ENCODE measurements at regions of chr3 and their contacts with region 1.

Region 1: DNA sequence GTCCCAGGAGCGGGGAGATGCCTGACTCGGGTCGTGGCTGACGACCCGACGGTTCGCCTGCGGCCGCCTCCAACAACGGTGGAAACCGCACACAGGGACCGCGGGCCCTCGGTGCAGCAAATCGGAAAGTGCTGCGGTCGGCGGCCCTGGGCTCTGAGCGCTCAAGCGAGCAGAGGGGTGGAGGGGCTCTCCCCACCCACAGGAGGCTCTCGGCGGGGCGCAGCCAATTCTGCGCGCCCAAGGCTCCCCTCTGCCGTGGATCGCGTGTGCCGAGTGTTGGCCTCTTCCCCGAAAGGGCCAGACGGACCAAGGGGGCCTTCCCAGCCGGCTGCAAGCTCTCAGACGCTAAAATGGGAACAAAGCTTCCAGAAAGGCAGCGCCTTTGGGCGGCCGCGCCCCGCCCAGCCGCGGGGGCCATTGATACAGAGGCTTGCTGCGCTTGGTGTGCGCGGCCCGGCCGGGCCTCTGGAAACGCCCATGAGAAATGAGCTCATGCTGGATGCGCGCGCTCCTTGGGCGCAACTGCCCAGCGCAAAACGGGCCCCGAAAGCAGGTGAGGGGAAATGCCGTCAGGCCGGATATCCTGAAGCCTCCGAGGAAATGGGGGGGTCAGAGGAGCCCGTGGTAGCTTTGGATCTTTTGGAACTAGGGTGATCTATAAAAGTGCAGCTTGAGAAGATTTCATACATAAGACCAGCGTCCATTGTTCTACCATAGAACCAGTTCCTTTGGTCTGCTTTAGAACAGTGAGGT is 1.2 kb upstream of the GSK3B start:
- DNase-seq: peak; percentile 89
- H3K4me3 Mint-ChIP-seq: no peak overlapping the region
- H3K27ac Mint-ChIP-seq: no peak overlapping the region
- H3K4me1 Mint-ChIP-seq: peaks cover 19% of the 10 kb centered on the region
- H3K27me3 Mint-ChIP-seq: no peaks in the 10 kb centered on the region

Region 2: DNA sequence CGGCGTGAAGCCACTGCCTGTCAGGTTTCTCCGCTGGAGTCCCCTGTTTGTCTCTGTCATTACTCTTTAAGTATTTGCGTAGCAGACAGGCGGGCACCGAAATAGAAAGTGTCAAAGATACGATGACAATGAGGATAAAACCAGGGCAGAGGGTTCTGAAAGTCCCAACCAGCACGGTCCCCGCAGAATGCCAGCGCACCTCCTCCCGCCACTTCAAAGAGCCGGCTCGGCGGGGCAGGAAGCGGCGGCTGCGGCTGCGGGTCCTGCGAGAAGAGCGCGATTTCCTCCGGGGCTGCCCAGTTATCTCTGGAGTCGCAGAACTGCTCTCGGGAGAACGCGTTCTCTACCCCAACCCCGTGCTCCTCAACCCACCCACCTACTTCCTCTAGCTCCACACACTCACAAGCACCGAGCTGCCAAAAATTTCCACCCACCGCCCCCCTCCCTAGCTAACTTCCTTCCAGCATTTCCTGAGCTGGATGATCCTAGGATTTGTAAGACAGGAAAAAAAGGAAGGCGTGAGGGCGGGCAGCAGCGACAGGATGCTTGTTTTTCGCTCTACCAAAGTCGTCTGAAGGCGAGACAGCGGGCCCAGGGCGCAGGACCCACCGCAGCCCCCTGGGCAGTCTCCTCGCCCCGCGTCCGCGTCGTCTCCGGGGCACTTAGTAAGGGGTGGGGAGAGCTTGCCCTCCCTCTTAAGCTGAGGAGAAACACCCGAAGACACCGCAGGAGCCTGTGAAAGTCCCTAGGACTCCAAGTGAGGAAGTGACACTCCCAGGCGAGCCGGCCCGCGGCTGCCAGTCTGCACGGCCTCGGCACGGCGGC is 801.3 kb before region 1 on chr3 and contains the start of gene ARHGAP31:
- intact Hi-C with region 1: loop called (anchors 1 kb)
- DNase-seq: peak; percentile 79
- H3K4me3 Mint-ChIP-seq: peak within 1 kb of the TSS; percentile 81
- H3K27ac Mint-ChIP-seq: peak within 1 kb of the TSS; percentile 86
- H3K4me1 Mint-ChIP-seq: peaks cover 51% of the 10 kb centered on the region
- H3K27me3 Mint-ChIP-seq: peaks cover 15% of the 10 kb centered on the region
- total RNA-seq, gene ARHGAP31: 13.2 and 14.0 TPM in 2 replicates

Region 3: GRCh38 chr3:119676771-119677640 is 418.4 kb before region 1 on chr3 and contains the start of gene COX17:
- intact Hi-C with region 1: loop called (anchors 10 kb)
- DNase-seq: peak; percentile 96
- H3K4me3 Mint-ChIP-seq: peak within 1 kb of the TSS; percentile 96
- H3K27ac Mint-ChIP-seq: peak within 1 kb of the TSS; percentile 94
- H3K4me1 Mint-ChIP-seq: peaks cover 36% of the 10 kb centered on the region
- H3K27me3 Mint-ChIP-seq: no peaks in the 10 kb centered on the region
- total RNA-seq, gene COX17: 61.2 and 64.9 TPM in 2 replicates

Region 4: DNA sequence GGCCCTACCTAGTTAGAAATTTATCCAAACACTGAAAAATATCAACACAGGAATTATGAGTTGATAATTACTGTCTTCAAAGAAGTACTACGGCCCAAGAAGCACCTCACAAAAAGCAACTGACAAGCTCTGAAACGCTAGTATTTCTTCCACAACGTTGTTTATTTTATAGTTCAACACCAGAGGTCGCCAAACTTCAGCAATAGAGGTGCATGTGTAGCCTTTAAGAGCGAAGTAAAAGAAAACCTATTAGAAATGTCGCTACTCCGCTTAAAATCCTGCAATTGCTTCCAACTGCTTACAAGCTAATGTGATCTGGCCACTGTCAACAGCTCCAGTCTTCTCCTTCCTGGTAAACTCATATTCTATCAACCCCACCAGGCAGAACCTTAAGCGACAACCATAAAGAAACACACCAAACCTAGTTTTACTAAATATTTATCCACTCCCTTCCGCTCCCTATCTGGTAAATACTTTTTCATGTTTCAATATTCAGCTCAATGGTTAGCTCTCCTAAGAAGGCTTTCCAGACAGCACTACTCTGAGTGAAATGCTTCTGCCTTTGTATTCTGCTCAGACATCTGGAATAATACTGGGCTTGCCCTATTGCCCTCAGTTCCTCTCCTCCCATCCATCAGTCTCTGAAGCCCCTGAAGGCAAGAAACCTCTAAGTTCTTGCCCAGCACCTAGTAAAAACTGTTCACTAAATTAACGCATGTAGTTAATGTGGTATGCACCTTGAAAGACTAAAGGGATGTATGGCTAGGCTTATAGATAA is 203.3 kb before region 1 on chr3:
- intact Hi-C with region 1: loop called (anchors 1 kb)
- DNase-seq: peak; percentile 12
- H3K4me3 Mint-ChIP-seq: no peak overlapping the region
- H3K27ac Mint-ChIP-seq: no peak overlapping the region
- H3K4me1 Mint-ChIP-seq: peaks cover 2% of the 10 kb centered on the region
- H3K27me3 Mint-ChIP-seq: no peaks in the 10 kb centered on the region

Region 5: GRCh38 chr3:120147072-120147871 is 51.9 kb after region 1 on chr3:
- intact Hi-C with region 1: loop called (anchors 5 kb)
- DNase-seq: no peak
- H3K4me3 Mint-ChIP-seq: no peak overlapping the region
- H3K27ac Mint-ChIP-seq: no peak overlapping the region
- H3K4me1 Mint-ChIP-seq: peaks cover 10% of the 10 kb centered on the region
- H3K27me3 Mint-ChIP-seq: no peaks in the 10 kb centered on the region

Region 6: DNA sequence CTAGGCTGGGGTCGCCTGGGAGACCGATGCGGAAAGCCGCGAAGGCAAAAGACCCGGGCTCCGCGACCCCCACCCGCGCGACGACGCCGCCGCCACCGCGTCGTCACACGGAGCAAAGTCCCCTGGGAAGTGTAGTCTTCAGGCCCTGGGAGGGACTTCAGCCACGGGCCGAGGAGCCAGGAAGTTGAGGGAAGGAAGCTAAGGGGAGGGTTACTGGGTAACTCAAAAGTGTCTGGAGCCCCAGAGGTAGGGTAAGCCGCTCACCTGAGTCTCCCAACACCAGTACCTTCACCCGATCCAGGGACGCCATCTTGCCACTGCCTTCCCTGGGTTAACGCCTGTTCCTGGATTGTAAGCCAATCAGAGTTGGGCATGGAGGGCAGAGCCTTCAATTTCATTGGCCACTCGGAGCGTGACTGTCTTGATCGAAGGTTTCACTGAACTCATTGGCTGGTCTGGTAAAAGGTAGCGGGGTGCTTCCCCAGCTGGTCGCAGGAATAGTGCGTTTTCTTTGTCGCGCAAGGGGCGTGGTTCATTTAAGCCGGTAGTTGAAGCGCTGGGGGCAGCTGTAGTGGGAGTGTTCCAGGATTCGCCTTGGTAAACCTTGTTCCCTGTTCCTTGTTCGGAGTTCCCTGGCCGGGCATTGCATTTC is 646.9 kb after region 1 on chr3 and contains the starts of genes GTF2E1 and RABL3:
- intact Hi-C with region 1: loop called (anchors 1 kb)
- DNase-seq: peak; percentile 95
- H3K4me3 Mint-ChIP-seq: peak within 1 kb of the TSS; percentile 95
- H3K27ac Mint-ChIP-seq: peak within 1 kb of the TSS; percentile 97
- H3K4me1 Mint-ChIP-seq: peaks cover 15% of the 10 kb centered on the region
- H3K27me3 Mint-ChIP-seq: no peaks in the 10 kb centered on the region
- total RNA-seq, gene GTF2E1: 23.3 and 24.7 TPM in 2 replicates
- total RNA-seq, gene RABL3: 26.6 and 30.8 TPM in 2 replicates

Measured in activated T-helper 2 cell treated with anti-CD3 and anti-CD28 coated beads, Interferon-gamma antibody, Interleukin-2, Interleukin-4, amounts not matched to agents 10 μg/mL and 5 μg/mL and 100 μg/mL, durations not matched to agents 14 hours and 24 hours and 36 hours (primary cell).